H1 (cell line): ENCODE measurements at regions of chr11 and their contacts with region 1.

Region 1: DNA sequence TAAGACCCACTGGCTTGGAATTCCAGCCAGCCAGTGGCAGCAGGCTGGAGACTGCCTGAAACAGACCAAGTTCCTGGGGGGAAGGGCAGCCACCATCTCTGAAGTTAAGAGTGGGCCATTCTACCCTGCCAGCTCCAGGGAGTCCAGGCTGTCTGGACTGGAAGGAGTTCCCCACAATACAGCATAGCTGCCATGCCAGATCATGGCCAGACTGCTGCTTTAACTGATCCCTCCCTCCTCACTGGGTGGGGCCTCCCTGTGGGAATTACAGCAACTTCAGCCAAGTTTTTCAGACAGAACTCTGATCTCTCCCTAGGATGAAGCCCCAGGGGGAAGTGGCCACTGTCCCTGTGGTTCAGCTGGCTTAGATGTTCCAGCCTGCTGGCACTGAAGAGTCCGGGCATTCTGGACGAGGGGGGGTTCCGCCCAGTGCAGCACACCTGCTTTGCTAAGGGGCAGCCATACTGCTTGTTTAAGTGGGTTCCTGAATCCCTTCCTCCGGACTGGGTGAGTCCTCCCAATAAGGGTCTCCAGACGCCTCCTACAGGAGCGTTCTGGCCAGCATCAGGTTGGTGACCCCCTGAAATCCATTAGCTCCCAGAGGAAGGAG is 455.4 kb downstream of the DLG2 start:
- DNase-seq: no peak
- H3K4me3 ChIP-seq: no peak overlapping the region
- H3K27ac ChIP-seq: 0 out of 2 replicates have a peak overlapping the region, but pooled peaks have one; percentile 24
- H3K4me1 ChIP-seq: peaks cover 2 to 11% (median 6%) of the 10 kb centered on the region in 4 experiments; a peak in 5 of 7 replicates
- H3K27me3 ChIP-seq: no peaks in the 10 kb centered on the region
- CTCF ChIP-seq: peak in 2 of 3 experiments; percentile 6 to 17; a peak in 2 of 4 replicates
- EP300 ChIP-seq: no peak
- POLR2A ChIP-seq: no peak
- RAD21 ChIP-seq: peak; percentile 28 to 37; a peak in 2 of 4 replicates

Region 2: GRCh38 chr11:85182441-85183387 is 11.0 kb after region 1 on chr11:
- CTCF ChIA-PET with region 1: interaction called, 13 read pairs
- POLR2A ChIA-PET with region 1: interaction called, 3 read pairs
- DNase-seq: no peak
- H3K4me3 ChIP-seq: no peak overlapping the region
- H3K27ac ChIP-seq: no peak overlapping the region
- H3K4me1 ChIP-seq: no peaks in the 10 kb centered on the region
- H3K27me3 ChIP-seq: no peaks in the 10 kb centered on the region
- CTCF ChIP-seq: peak in 2 of 3 experiments; percentile 30 to 75; a peak in 2 of 4 replicates
- EP300 ChIP-seq: no peak
- POLR2A ChIP-seq: no peak
- RAD21 ChIP-seq: peak; percentile 18 to 43; a peak in 2 of 4 replicates